ENCODE measurements at regions of chr2 and their contacts with region 1.

Region 1: DNA sequence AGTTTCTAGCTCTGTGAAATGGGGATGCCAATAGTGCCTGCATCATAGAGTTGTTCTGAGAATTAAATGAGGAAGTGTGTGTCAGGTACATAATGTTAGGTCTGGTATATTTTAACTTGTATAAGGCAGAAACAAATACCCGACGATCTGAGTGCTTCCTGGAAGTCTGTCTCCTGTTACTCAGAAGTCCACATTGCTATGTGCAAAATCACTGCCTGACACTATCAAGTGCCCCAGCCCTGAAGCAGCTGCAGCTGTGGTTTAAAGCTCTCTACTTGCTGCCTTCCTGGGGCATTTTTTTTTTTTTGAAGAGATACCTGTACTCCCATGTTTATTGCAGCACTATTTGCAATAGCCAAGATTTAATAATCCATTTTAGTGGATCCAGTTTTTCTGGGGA is 125.3 kb downstream of the SLC4A3 start:
- DNase-seq: no peak
- ATAC-seq: no peak
- H3K4me3 Mint-ChIP-seq: no peak overlapping the region
- H3K27ac Mint-ChIP-seq: no peak overlapping the region
- H3K4me1 Mint-ChIP-seq: no peaks in the 10 kb centered on the region
- H3K27me3 Mint-ChIP-seq: no peaks in the 10 kb centered on the region; the same call in 1 of the 2 replicates
- CTCF ChIP-seq: no peak

Region 2: GRCh38 chr2:219736209-219736608 is 16.5 kb before region 1 on chr2:
- CTCF ChIA-PET with region 1: no interaction called
- POLR2A ChIA-PET with region 1: no interaction called
- DNase-seq: no peak
- ATAC-seq: peak; percentile 69
- H3K4me3 Mint-ChIP-seq: no peak overlapping the region
- H3K27ac Mint-ChIP-seq: no peak overlapping the region
- H3K4me1 Mint-ChIP-seq: peaks cover 32% of the 10 kb centered on the region
- H3K27me3 Mint-ChIP-seq: no peaks in the 10 kb centered on the region
- CTCF ChIP-seq: 0 out of 2 replicates have a peak, but pooled peaks have one; percentile 28

Region 3: GRCh38 chr2:219783359-219783975 is 30.7 kb after region 1 on chr2:
- CTCF ChIA-PET with region 1: no interaction called
- POLR2A ChIA-PET with region 1: no interaction called
- DNase-seq: no peak
- ATAC-seq: no peak
- H3K4me3 Mint-ChIP-seq: no peak overlapping the region
- H3K27ac Mint-ChIP-seq: no peak overlapping the region
- H3K4me1 Mint-ChIP-seq: no peaks in the 10 kb centered on the region
- H3K27me3 Mint-ChIP-seq: no peaks in the 10 kb centered on the region; the same call in none of the 2 replicates
- CTCF ChIP-seq: no peak

Region 4: GRCh38 chr2:219828127-219828526 is 75.4 kb after region 1 on chr2:
- CTCF ChIA-PET with region 1: no interaction called
- POLR2A ChIA-PET with region 1: interaction called, 10 read pairs
- DNase-seq: no peak
- ATAC-seq: no peak
- H3K4me3 Mint-ChIP-seq: no peak overlapping the region
- H3K27ac Mint-ChIP-seq: no peak overlapping the region
- H3K4me1 Mint-ChIP-seq: no peaks in the 10 kb centered on the region
- H3K27me3 Mint-ChIP-seq: no peaks in the 10 kb centered on the region; the same call in 1 of the 2 replicates
- CTCF ChIP-seq: no peak